ENCODE measurements at regions of chr5 and their contacts with region 1.

Region 1: GRCh38 chr5:127313847-127314473 is 23.4 kb downstream of the MEGF10 start:
- DNase-seq: no peak
- ATAC-seq: no peak

Region 2: GRCh38 chr5:126676195-126676624 is 637.8 kb before region 1 on chr5:
- intact Hi-C with region 1: loop called (anchors 10 kb)
- DNase-seq: no peak
- ATAC-seq: peak; percentile 64